PC-9 (cell line): ENCODE measurements at regions of chr4 and their contacts with region 1.

Region 1: DNA sequence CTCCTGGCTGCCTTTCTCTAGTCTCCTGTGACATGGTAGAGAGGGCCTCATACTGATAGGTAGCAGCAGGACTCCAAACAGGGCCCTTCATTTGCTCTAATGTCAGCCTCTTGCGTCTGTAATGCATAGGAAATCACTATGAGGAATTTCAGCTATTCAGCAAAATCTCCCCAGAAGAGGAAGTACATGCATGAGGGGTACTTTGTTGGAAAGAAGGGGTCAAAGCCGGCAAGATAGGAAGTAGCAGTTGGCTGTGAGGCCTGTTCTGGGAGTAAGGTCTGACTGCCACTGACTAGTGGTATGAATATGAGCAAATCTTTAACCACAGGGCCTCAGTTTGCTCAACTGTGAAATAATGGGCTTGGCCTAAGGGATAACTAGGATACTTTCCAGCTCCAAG is 283.2 kb downstream of the ARHGAP10 start:
- DNase-seq: no peak
- H3K4me3 ChIP-seq: no peak overlapping the region
- H3K27ac ChIP-seq: no peak overlapping the region
- H3K4me1 ChIP-seq: no peaks in the 10 kb centered on the region
- H3K27me3 ChIP-seq: no peaks in the 10 kb centered on the region
- CTCF ChIP-seq: no peak

Region 2: DNA sequence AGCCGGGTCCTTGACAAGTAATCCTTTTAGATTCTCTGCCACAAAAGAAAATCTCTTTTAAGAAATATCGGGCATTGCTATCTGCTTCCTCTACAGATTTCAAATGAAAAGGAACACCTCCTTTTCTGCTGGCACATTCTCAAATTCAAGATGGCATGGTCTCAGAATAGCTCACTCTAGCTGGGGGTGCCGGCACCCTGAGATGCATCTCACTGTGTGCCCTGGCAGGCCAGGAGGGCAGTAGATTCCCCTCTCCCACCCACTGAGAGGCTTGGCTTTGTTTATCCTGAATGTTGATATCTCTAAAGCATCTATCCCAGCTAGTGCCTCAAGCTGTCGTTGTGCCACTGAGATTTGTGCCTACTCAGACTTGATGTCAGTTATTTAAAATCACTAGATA is 36.3 kb after region 1 on chr4:
- CTCF ChIA-PET with region 1: no interaction called
- POLR2A ChIA-PET with region 1: no interaction called
- intact Hi-C with region 1: loop called (anchors 1 kb)
- DNase-seq: no peak
- H3K4me3 ChIP-seq: no peak overlapping the region
- H3K27ac ChIP-seq: no peak overlapping the region
- H3K4me1 ChIP-seq: peaks cover 7% of the 10 kb centered on the region; the same call in 1 of the 2 replicates
- H3K27me3 ChIP-seq: no peaks in the 10 kb centered on the region
- CTCF ChIP-seq: no peak